Activated CD4-positive, alpha-beta memory T cell treated with anti-CD3 and anti-CD28 coated beads, Interleukin-2, amount 10 ng/mL, durations not matched to agents 7 days and 5 days (primary cell): ENCODE measurements at regions of chr6 and their contacts with region 1.

Region 1: GRCh38 chr6:142819603-142820337 is 125.2 kb downstream of the HIVEP2 start:
- DNase-seq: peak; percentile 52
- H3K4me3 Mint-ChIP-seq: peak overlapping the region; percentile 79
- H3K27ac Mint-ChIP-seq: peak overlapping the region; percentile 92
- H3K4me1 Mint-ChIP-seq: peaks cover 64% of the 10 kb centered on the region
- H3K27me3 Mint-ChIP-seq: no peaks in the 10 kb centered on the region

Region 2: DNA sequence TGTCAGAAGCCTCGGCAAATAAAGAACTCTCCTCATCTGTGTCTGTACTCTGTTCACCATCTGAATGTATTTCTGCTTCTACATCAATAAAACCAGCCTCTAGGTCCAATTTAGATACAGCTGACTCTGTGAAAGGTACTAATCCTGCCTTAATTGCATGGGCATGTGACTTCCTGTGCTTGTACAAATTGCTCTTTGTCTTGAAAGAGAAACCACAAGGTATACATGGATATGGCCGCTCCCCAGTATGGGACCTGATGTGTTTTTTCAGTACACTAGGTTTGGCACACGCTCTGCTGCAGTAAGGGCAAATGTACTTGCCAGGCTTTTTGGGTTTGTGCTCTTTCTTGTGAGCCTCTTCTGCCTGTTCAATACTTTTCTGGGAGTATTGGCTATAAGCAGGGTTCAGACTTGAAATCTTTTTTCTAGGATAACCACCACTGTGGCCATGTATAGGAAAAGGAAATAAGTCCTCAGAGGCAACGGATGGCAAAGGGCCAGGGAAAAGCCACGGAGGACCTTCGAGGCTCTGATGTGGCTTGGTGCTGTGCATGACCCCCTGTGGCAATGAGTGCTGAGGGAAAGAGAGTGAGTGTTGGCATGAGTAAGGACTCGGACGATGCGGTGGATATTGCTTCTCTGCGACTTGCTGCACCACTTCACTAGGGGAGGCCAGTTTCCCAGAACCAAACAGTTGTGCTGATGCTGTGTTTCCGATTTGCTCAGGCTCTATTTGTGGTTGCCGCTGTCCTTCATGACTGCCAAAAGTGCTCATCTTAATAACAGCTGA is 45.7 kb before region 1 on chr6:
- CTCF ChIA-PET with region 1: interaction called, 5 read pairs
- POLR2A ChIA-PET with region 1: interaction called, 11 read pairs
- DNase-seq: no peak
- H3K4me3 Mint-ChIP-seq: peak overlapping the region; percentile 26
- H3K27ac Mint-ChIP-seq: peak overlapping the region; percentile 77
- H3K4me1 Mint-ChIP-seq: peaks cover 36% of the 10 kb centered on the region
- H3K27me3 Mint-ChIP-seq: no peaks in the 10 kb centered on the region

Region 3: DNA sequence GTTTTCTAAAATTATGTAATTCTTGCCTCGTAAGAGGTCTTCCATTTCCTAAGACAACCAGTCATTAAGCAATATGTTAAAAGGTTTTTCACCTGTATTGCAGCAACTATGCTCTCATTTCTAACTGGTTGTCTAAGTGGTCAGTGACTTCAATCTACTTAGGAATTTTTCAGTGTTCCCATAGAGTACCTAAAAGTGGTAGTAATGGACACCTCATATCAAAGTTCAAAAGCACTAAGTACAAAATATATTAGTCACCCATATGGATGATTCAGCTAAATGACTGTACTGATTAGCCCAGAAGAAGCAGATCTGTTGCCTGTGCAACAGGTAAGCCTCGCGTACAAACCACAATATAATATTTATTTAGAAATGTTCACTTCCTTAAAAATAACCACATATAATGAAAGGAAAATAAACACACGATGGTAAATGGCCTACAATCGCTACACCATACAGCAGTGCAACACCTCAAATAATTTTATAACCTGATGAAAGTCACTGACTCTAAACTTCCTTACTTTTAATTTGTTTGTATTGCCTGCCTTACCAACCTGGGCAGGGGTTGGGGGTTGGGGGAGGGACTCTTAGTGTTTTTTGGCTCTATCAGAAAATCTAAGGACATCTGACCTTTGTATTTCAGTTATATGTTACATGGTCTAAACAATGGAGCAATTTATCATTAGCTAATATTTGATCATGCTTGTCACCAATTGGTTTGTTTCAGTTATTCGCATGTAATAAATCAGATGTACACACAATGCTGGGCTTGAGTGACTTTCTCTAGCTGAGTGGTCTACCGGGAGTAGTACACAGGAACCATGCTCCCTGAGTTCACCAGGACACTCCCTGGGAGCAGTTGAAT is 19.3 kb after region 1 on chr6:
- CTCF ChIA-PET with region 1: interaction called, 16 read pairs
- POLR2A ChIA-PET with region 1: interaction called, 79 read pairs
- DNase-seq: no peak
- H3K4me3 Mint-ChIP-seq: no peak overlapping the region
- H3K27ac Mint-ChIP-seq: peak overlapping the region; percentile 10
- H3K4me1 Mint-ChIP-seq: peaks cover 60% of the 10 kb centered on the region
- H3K27me3 Mint-ChIP-seq: no peaks in the 10 kb centered on the region

Region 4: GRCh38 chr6:142857233-142857761 is 37.5 kb after region 1 on chr6:
- CTCF ChIA-PET with region 1: interaction called, 5 read pairs
- POLR2A ChIA-PET with region 1: interaction called, 12 read pairs
- DNase-seq: no peak
- H3K4me3 Mint-ChIP-seq: peak overlapping the region; percentile 69
- H3K27ac Mint-ChIP-seq: peak overlapping the region; percentile 98
- H3K4me1 Mint-ChIP-seq: peaks cover 82% of the 10 kb centered on the region
- H3K27me3 Mint-ChIP-seq: no peaks in the 10 kb centered on the region

Region 5: DNA sequence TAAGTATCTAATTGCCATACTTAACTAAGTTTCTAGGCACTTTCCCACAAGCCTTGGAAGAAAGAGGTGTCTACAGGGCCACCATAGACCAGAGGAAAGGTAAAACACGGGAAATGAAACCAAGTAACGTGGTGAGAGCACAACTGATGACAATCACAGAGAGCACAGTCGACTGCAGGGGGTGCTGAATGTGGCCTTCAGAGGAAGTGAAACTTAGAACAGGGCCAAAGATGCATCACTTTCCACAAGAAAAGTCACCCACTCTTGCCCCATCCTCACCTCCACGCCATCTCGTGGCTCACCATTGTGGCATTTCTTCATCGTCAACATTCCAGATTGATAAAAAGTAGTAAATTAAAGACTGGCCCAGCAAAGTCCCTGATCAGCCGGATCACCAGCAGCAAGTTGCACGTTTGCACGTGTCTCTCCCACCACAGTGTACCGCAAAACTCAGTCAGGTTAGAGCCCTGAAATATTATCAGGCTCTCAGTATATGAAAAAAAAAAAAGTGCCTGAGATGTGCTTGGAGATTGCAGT is 93.8 kb after region 1 on chr6:
- CTCF ChIA-PET with region 1: no interaction called
- POLR2A ChIA-PET with region 1: interaction called, 12 read pairs
- DNase-seq: peak; percentile 81
- H3K4me3 Mint-ChIP-seq: peak overlapping the region; percentile 75
- H3K27ac Mint-ChIP-seq: peak overlapping the region; percentile 99
- H3K4me1 Mint-ChIP-seq: peaks cover 67% of the 10 kb centered on the region
- H3K27me3 Mint-ChIP-seq: no peaks in the 10 kb centered on the region

Region 6: DNA sequence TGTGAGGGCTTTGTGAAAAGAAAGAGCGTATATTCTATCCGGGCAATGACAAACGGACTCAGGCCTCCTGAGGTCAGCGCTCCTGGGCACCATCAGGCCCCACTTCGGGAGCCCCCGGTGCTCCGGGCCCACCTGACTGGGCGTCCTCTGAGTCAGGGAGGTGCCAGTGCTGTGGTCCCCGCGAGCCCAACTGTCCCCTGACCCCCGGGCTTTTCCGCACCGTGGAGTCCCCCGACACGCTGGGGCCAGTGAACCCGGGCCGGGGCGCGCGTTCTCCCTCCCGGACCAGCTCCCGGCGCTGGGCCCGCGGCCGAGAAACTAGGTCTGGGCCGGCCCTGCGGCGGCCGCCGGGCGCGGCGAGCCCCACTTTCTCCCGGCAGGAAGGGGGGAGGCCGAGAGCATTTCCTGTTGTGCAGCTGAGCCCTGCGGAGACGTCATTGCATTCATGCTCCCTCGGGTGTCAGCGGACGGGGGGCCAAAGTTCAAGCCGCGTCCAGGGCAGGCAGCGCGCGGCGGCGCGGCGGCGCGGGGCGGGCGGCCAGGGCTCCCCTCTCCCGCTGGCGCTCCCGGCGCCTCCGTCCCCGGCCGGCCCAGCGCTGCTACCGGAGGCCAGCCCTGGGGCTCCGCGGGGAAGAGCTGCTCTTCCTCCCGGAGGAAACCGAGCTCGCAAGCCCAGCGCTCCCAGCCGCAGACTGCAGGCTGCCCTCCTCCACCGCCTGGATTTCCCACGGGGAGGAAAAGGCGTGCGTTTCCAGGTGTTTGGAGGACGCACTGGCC is 106.9 kb after region 1 on chr6:
- CTCF ChIA-PET with region 1: no interaction called
- POLR2A ChIA-PET with region 1: interaction called, 27 read pairs
- DNase-seq: peak; percentile 82
- H3K4me3 Mint-ChIP-seq: peak overlapping the region; percentile 84
- H3K27ac Mint-ChIP-seq: peak overlapping the region; percentile 87
- H3K4me1 Mint-ChIP-seq: peaks cover 42% of the 10 kb centered on the region
- H3K27me3 Mint-ChIP-seq: no peaks in the 10 kb centered on the region